B cell (primary cell): ENCODE measurements at regions of chr16 and their contacts with region 1.

Region 1: GRCh38 chr16:46830902-46831647 is at the start of gene C16orf87:
- DNase-seq: peak; percentile 97
- ATAC-seq: peak; percentile 92
- H3K4me3 ChIP-seq: peak within 1 kb of the TSS; percentile 75 to 88 (median 82)
- H3K4me3 Mint-ChIP-seq: peak within 1 kb of the TSS; percentile 95
- H3K27ac ChIP-seq: peak within 1 kb of the TSS; percentile 55 to 85
- H3K27ac Mint-ChIP-seq: peak within 1 kb of the TSS; percentile 93
- H3K4me1 ChIP-seq: peaks cover 34 to 47% of the 10 kb centered on the region in 2 donors
- H3K4me1 Mint-ChIP-seq: peaks cover 59% of the 10 kb centered on the region
- H3K27me3 ChIP-seq: no peaks in the 10 kb centered on the region
- H3K27me3 Mint-ChIP-seq: no peaks in the 10 kb centered on the region
- CTCF ChIP-seq: no peak
- total RNA-seq, gene C16orf87: 11.3 and 12.5 TPM in 2 replicates

Region 2: GRCh38 chr16:46789499-46790414 is 41.3 kb before region 1 on chr16:
- CTCF ChIA-PET with region 1: interaction called, 6 read pairs
- POLR2A ChIA-PET with region 1: interaction called, 4 read pairs
- intact Hi-C with region 1: loop called (anchors 1 kb)
- DNase-seq: peak; percentile 89
- ATAC-seq: peak; percentile 94
- H3K4me3 ChIP-seq: peak overlapping the region; percentile 21 to 90 (median 66)
- H3K4me3 Mint-ChIP-seq: peak overlapping the region; percentile 85
- H3K27ac ChIP-seq: peak overlapping the region; percentile 42 to 70
- H3K27ac Mint-ChIP-seq: peak overlapping the region; percentile 81
- H3K4me1 ChIP-seq: peaks cover 36 to 42% of the 10 kb centered on the region in 2 donors
- H3K4me1 Mint-ChIP-seq: peaks cover 52% of the 10 kb centered on the region
- H3K27me3 ChIP-seq: no peaks in the 10 kb centered on the region
- H3K27me3 Mint-ChIP-seq: no peaks in the 10 kb centered on the region
- CTCF ChIP-seq: no peak

Region 3: GRCh38 chr16:46883690-46884512 is 52.8 kb after region 1 on chr16 and contains the start of gene GPT2:
- CTCF ChIA-PET with region 1: no interaction called
- POLR2A ChIA-PET with region 1: interaction called, 3 read pairs
- intact Hi-C with region 1: loop called (anchors 1 kb)
- DNase-seq: peak; percentile 83
- ATAC-seq: peak; percentile 95
- H3K4me3 ChIP-seq: peak within 1 kb of the TSS; percentile 48 to 84 (median 72)
- H3K4me3 Mint-ChIP-seq: peak within 1 kb of the TSS; percentile 89
- H3K27ac ChIP-seq: no peak within 1 kb of the TSS
- H3K27ac Mint-ChIP-seq: peak within 1 kb of the TSS; percentile 67
- H3K4me1 ChIP-seq: peaks cover 9 to 11% of the 10 kb centered on the region in 2 donors
- H3K4me1 Mint-ChIP-seq: peaks cover 18% of the 10 kb centered on the region
- H3K27me3 ChIP-seq: peaks cover 0 to 5% (median 2%) of the 10 kb centered on the region in 4 experiments
- H3K27me3 Mint-ChIP-seq: no peaks in the 10 kb centered on the region
- CTCF ChIP-seq: no peak
- total RNA-seq, gene GPT2: 9.9 and 11.0 TPM in 2 replicates

Region 4: GRCh38 chr16:47018223-47018891 is 187.3 kb after region 1 on chr16:
- CTCF ChIA-PET with region 1: no interaction called
- POLR2A ChIA-PET with region 1: no interaction called
- intact Hi-C with region 1: loop called (anchors 5 kb)
- DNase-seq: peak; percentile 91
- ATAC-seq: peak; percentile 99
- H3K4me3 ChIP-seq: no peak overlapping the region
- H3K4me3 Mint-ChIP-seq: peak overlapping the region; percentile 62
- H3K27ac ChIP-seq: peak overlapping the region; percentile 55 to 65
- H3K27ac Mint-ChIP-seq: peak overlapping the region; percentile 58
- H3K4me1 ChIP-seq: peaks cover 23 to 29% of the 10 kb centered on the region in 2 donors
- H3K4me1 Mint-ChIP-seq: peaks cover 24% of the 10 kb centered on the region
- H3K27me3 ChIP-seq: no peaks in the 10 kb centered on the region
- H3K27me3 Mint-ChIP-seq: no peaks in the 10 kb centered on the region
- CTCF ChIP-seq: peak; percentile 78

Region 5: GRCh38 chr16:47460711-47461597 is 629.9 kb after region 1 on chr16 and contains the starts of genes ITFG1 and PHKB:
- CTCF ChIA-PET with region 1: no interaction called
- POLR2A ChIA-PET with region 1: no interaction called
- intact Hi-C with region 1: loop called (anchors 5 kb)
- DNase-seq: peak; percentile 97
- ATAC-seq: peak; percentile 89
- H3K4me3 ChIP-seq: peak within 1 kb of the TSS; percentile 73 to 93 (median 88)
- H3K4me3 Mint-ChIP-seq: peak within 1 kb of the TSS; percentile 98
- H3K27ac ChIP-seq: peak within 1 kb of the TSS; percentile 94 to 97
- H3K27ac Mint-ChIP-seq: peak within 1 kb of the TSS; percentile 97
- H3K4me1 ChIP-seq: peaks cover 40 to 53% of the 10 kb centered on the region in 2 donors
- H3K4me1 Mint-ChIP-seq: peaks cover 68% of the 10 kb centered on the region
- H3K27me3 ChIP-seq: no peaks in the 10 kb centered on the region
- H3K27me3 Mint-ChIP-seq: no peaks in the 10 kb centered on the region
- CTCF ChIP-seq: no peak
- total RNA-seq, gene ITFG1: 40.4 and 47.5 TPM in 2 replicates
- total RNA-seq, gene PHKB: 223 and 228 TPM in 2 replicates